ENCODE measurements at regions of chr12 and their contacts with region 1.

Region 1: DNA sequence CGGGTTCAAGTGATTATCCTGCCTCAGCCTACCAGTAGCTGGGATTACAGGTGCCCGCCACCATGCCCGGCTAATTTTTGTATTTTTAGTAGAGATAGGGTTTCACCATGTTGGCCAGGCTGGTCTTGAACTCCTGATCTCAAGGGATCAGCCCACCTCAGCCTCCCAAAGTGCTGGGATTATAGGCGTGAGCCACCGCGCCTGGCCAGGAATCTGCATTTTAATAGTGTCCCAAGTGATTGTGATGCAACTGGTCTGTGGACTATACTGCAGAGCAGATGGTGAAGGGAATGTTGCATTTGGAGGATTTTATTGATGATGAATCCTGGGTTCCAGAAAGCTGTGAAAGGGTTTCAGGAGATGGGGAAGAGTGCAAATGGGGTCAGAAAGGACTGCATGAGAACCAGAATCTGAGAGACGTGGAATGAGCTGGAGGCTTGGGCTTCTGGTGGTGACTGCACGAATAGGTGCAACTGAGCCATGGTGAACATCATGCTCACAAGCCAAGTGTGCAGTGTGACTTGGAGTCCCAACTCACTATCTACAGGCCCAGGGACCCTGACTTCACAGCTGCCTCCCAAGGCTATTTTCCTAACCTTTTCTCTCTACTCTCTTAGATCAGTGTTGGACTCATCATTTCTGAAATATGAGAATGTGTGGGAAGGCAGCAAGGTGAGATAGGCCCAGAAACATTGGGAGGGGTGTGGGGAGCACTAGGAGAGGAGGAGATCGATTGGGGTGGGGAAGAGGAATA is 4.5 kb downstream of the RPS26 start:
- DNase-seq: no peak
- H3K4me3 ChIP-seq: no peak overlapping the region
- H3K4me3 Mint-ChIP-seq: no peak overlapping the region
- H3K27ac ChIP-seq: no peak overlapping the region
- H3K27ac Mint-ChIP-seq: peak overlapping the region in 7 of 8 donors; percentile 50 to 83 (median 63)
- H3K4me1 ChIP-seq: peaks cover 15% of the 10 kb centered on the region
- H3K4me1 Mint-ChIP-seq: peaks cover 26 to 29% (median 29%) of the 10 kb centered on the region in 3 donors
- H3K27me3 ChIP-seq: no peaks in the 10 kb centered on the region
- H3K27me3 Mint-ChIP-seq: peaks cover 0 to 5% of the 10 kb centered on the region in 2 donors

Region 2: GRCh38 chr12:56104109-56104814 is 58.1 kb after region 1 on chr12 and contains the start of gene PA2G4:
- CTCF ChIA-PET with region 1: interaction called, 10 read pairs
- POLR2A ChIA-PET with region 1: interaction called, 10 read pairs
- DNase-seq: peak; percentile 90 to 98 (median 96)
- H3K4me3 ChIP-seq: peak within 1 kb of the TSS; percentile 79
- H3K4me3 Mint-ChIP-seq: peak within 1 kb of the TSS; percentile 97 to 100 (median 98)
- H3K27ac ChIP-seq: peak within 1 kb of the TSS; percentile 82
- H3K27ac Mint-ChIP-seq: peak within 1 kb of the TSS; percentile 95 to 99 (median 98)
- H3K4me1 ChIP-seq: peaks cover 40% of the 10 kb centered on the region
- H3K4me1 Mint-ChIP-seq: peaks cover 61 to 68% (median 62%) of the 10 kb centered on the region in 3 donors
- H3K27me3 ChIP-seq: no peaks in the 10 kb centered on the region
- H3K27me3 Mint-ChIP-seq: no peaks in the 10 kb centered on the region
- total RNA-seq, gene PA2G4: 468 to 504 TPM

Region 3: GRCh38 chr12:56326533-56326932 is 280.3 kb after region 1 on chr12:
- CTCF ChIA-PET with region 1: no interaction called
- POLR2A ChIA-PET with region 1: no interaction called
- DNase-seq: no peak
- H3K4me3 ChIP-seq: no peak overlapping the region
- H3K4me3 Mint-ChIP-seq: no peak overlapping the region
- H3K27ac ChIP-seq: no peak overlapping the region
- H3K27ac Mint-ChIP-seq: peak overlapping the region in 1 of 8 donors; percentile 43
- H3K4me1 ChIP-seq: no peaks in the 10 kb centered on the region
- H3K4me1 Mint-ChIP-seq: peaks cover 0 to 4% (median 3%) of the 10 kb centered on the region in 3 donors
- H3K27me3 ChIP-seq: no peaks in the 10 kb centered on the region
- H3K27me3 Mint-ChIP-seq: no peaks in the 10 kb centered on the region